ENCODE measurements at regions of chr6 and their contacts with region 1.

Region 1: GRCh38 chr6:3797231-3798054 is 45.9 kb upstream of the PXDC1 start:
- DNase-seq: no peak
- H3K4me3 ChIP-seq: no peak overlapping the region
- H3K27ac ChIP-seq: no peak overlapping the region
- H3K4me1 ChIP-seq: peaks cover 0 to 49% (median 14%) of the 10 kb centered on the region in 4 donors
- H3K27me3 ChIP-seq: no peaks in the 10 kb centered on the region
- CTCF ChIP-seq: no peak

Region 2: DNA sequence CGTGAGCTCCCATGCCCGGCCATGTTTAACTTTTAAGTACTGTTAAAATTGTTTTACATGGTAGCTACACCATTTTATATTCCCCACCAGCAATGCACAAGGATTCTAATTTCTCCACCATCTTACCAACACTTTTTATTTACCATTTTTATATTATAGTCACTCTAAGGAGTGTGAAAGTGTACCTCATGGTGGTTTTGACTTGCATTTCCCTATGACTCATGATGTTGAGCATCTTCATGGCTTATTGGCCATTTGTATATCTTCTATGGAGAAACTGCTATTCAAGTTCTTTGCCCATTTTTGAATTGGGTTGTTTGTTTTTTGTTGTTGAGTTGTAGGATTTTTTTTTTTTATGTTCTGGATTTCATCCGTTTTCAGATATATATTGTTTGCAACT is 694.6 kb before region 1 on chr6:
- intact Hi-C with region 1: no loop called
- DNase-seq: no peak
- H3K4me3 ChIP-seq: no peak overlapping the region
- H3K27ac ChIP-seq: no peak overlapping the region
- H3K4me1 ChIP-seq: no peaks in the 10 kb centered on the region
- H3K27me3 ChIP-seq: no peaks in the 10 kb centered on the region
- CTCF ChIP-seq: no peak

Region 3: DNA sequence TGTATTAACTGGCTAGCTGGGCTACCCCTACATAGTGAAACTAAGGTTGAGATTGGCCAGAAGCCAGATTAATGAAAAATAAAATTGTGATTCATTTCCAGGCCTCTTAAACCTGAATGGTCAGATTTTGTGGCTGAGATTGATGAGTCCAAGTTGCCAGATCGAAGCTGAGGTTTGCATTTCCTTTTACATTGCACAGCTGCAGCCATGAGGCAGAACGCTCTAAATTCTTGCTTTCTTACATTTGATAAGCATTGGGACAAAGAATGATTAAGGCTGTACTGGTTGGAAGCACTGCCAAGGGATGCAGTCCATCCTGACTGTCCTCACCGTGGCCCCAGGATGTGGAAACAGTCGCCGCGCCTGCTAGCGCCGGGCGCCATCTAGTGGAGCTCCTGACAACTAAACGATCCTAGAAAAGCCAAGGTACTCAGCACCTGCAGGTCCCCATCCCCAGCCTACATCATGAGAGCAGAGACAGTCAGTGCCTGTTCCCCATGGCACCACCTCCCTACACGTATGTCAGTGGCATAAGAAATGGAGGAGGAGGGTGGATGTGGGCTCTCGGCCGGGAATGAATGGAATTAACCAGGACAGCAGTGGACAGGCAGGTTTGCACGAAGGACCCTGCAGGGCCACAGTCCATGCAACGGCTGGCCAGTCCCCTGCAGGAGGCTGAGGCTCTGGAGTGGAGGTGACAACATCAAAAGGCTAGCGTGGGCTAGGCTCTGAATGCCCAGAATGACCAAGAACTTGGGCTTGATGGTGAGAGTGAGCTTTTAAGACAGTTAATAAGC is 64.9 kb before region 1 on chr6:
- intact Hi-C with region 1: no loop called
- DNase-seq: peak; percentile 73 to 86
- H3K4me3 ChIP-seq: peak overlapping the region in 1 of 2 donors; percentile 3
- H3K27ac ChIP-seq: peak overlapping the region; percentile 62 to 75
- H3K4me1 ChIP-seq: peaks cover 0 to 100% (median 68%) of the 10 kb centered on the region in 4 donors
- H3K27me3 ChIP-seq: no peaks in the 10 kb centered on the region
- CTCF ChIP-seq: peak; percentile 86 to 87

Region 4: DNA sequence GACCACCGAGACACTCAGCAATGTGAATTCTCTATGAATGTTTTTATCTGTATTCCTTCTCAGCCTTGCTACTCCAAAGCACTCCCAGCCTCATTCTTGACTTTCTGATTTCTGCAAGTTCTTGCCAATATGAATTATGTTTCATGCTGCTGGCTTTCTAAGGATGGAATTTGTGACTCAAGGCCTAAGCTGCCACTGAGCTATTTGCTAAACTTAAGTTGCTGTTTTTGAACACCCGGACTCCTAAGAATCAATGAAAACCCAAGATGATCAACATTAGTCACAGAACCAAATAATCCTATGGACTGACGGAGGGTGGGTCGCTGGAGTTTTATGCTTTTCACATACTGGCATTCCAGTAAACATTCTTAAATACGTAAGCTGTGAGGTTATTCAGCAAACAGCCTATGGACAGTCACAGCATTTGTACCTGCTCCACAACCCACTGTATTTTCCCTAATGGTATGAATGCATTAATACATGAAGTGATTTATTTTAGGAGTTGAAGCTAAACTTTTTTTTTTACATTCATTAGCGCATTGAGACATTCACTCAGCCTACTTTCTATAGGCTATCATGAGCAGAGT is 37.7 kb before region 1 on chr6:
- intact Hi-C with region 1: loop called (anchors 5 kb)
- DNase-seq: no peak
- H3K4me3 ChIP-seq: no peak overlapping the region
- H3K27ac ChIP-seq: peak overlapping the region; percentile 66 to 71
- H3K4me1 ChIP-seq: peaks cover 0 to 45% (median 15%) of the 10 kb centered on the region in 4 donors
- H3K27me3 ChIP-seq: no peaks in the 10 kb centered on the region
- CTCF ChIP-seq: no peak

Measured in tibial artery (tissue), 4 donors.